Dorsolateral prefrontal cortex (tissue), 120 donors: ENCODE measurements at regions of chr1 and their contacts with region 1.

Region 1: GRCh38 chr1:234610348-234611152 is 572 bp upstream of the IRF2BP2 start:
- DNase-seq: peak; percentile 90 to 95 (median 93)
- H3K4me3 ChIP-seq: peak overlapping the region; percentile 50 to 89 (median 71)
- H3K27ac ChIP-seq: peak overlapping the region; percentile 94 to 100 (median 99)
- H3K27me3 ChIP-seq: no peaks in the 10 kb centered on the region
- CTCF ChIP-seq: peak in 12 of 56 donors; percentile 3 to 39 (median 21)

Region 2: DNA sequence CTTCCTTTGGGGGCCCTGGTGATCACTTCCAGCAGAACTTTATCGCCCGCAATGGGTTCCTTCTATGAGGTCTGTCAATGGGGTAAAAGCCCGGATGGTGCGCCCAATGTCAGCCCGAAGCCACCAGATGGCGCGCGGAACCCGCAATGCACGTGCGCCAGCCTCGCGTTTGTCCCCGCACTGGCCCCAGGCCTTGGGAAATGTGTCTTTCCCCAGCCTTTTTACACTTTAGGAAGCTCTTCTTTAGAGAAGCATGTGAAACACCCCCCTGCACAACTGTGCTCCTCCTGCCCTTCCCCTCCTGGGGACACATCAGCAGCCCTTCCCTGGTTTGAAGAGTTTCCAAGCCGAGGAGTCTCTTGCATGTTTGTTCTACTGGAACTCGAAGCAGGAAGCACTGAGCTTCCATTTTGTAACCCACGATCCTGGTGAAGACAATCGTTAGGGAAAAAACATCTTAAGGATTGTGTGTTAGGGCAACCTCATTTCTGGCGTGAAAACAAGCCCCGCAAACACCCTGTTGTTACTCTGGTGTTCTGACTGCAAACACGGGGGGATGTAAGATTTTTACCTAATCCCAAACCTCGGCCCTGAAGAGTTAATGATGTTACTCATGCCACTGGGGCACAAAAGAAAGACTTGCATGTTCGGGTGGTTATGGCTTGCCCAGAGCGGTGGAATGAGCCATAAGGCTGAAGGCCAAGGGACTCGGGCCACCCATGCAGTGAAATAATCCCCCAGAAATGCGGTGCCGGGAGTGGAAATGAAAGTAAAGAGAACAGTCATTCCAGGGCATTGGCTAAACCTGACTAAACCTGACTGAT is 111.2 kb before region 1 on chr1:
- intact Hi-C with region 1: loop called in 1 of 2 experiments (anchors 2 kb)
- DNase-seq: peak; percentile 86 to 96 (median 92)
- H3K4me3 ChIP-seq: peak overlapping the region in 56 of 59 donors; percentile 1 to 60 (median 36)
- H3K27ac ChIP-seq: peak overlapping the region; percentile 73 to 97 (median 90)
- H3K27me3 ChIP-seq: no peaks in the 10 kb centered on the region
- CTCF ChIP-seq: peak; percentile 88 to 99 (median 97)

Region 3: DNA sequence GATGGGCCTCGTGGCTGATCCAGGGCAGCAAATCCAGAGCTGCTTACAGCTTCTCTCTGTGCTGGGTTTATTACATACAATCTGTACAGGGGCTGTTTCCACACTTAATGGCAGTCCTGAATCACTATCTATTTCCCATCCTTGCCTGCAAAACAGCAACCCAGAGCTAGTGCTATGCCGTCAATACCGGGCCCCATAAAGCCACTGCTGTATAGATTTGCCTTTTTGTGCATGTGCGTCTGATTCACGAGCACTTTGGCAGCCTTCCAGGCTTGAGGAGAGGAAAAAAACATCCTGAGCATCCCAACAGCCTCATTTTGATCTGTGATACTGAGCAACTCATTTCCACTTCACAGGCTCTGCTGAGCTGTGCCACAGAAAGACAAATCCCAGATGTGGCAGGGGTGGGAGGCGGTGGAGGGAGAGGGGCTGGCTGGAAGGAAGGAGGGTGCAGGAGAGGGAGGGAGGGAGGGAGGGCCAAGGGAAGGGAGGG is 66.4 kb before region 1 on chr1:
- intact Hi-C with region 1: loop called in 1 of 2 experiments (anchors 2 kb)
- DNase-seq: peak; percentile 54 to 84 (median 74)
- H3K4me3 ChIP-seq: peak overlapping the region in 8 of 59 donors; percentile 1 to 31 (median 17)
- H3K27ac ChIP-seq: peak overlapping the region; percentile 86 to 99 (median 97)
- H3K27me3 ChIP-seq: no peaks in the 10 kb centered on the region
- CTCF ChIP-seq: no peak

Region 4: DNA sequence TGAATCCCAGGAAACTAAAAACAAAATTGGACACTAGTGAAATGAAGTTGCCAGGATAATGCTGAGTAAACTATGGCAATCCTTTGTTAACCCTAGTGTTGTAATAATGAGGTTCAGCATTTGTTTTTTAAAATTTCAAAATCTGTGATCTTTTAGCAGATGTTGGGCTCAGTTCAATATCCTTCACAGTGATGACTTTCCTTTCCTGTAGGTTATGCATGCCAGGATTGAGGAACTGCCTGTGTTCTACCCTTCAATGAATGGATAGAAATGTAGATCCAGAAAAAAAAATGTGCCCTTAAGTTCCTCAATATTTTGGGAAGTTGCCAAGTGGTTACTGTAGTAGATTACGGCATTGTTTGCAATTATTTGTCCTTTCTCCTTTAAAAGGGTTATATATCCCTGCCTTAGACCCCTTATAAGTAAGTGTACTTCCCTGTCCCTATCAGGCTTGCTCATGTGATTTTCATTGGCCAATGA is 35.0 kb after region 1 on chr1:
- intact Hi-C with region 1: no loop called
- DNase-seq: no peak
- H3K4me3 ChIP-seq: no peak overlapping the region
- H3K27ac ChIP-seq: no peak overlapping the region
- H3K27me3 ChIP-seq: peaks cover 0 to 7% (median 0%) of the 10 kb centered on the region in 45 donors
- CTCF ChIP-seq: no peak

Region 5: GRCh38 chr1:234862944-234863515 is 252.5 kb after region 1 on chr1:
- intact Hi-C with region 1: loop called in 1 of 2 experiments (anchors 5 kb)
- DNase-seq: peak; percentile 52 to 81 (median 71)
- H3K4me3 ChIP-seq: peak overlapping the region in 49 of 59 donors; percentile 0 to 60 (median 29)
- H3K27ac ChIP-seq: peak overlapping the region; percentile 28 to 91 (median 83)
- H3K27me3 ChIP-seq: no peaks in the 10 kb centered on the region
- CTCF ChIP-seq: peak in 2 of 56 donors; percentile 12 to 18

Region 6: GRCh38 chr1:234997201-234997895 is 386.8 kb after region 1 on chr1:
- intact Hi-C with region 1: loop called in 1 of 2 experiments (anchors 2 kb)
- DNase-seq: peak; percentile 90 to 98 (median 96)
- H3K4me3 ChIP-seq: peak overlapping the region in 43 of 59 donors; percentile 0 to 48 (median 24)
- H3K27ac ChIP-seq: peak overlapping the region; percentile 74 to 97 (median 90)
- H3K27me3 ChIP-seq: no peaks in the 10 kb centered on the region
- CTCF ChIP-seq: peak in 10 of 56 donors; percentile 5 to 39 (median 22)